Lower leg skin (tissue), 4 donors: ENCODE measurements at regions of chr11 and their contacts with region 1.

Region 1: DNA sequence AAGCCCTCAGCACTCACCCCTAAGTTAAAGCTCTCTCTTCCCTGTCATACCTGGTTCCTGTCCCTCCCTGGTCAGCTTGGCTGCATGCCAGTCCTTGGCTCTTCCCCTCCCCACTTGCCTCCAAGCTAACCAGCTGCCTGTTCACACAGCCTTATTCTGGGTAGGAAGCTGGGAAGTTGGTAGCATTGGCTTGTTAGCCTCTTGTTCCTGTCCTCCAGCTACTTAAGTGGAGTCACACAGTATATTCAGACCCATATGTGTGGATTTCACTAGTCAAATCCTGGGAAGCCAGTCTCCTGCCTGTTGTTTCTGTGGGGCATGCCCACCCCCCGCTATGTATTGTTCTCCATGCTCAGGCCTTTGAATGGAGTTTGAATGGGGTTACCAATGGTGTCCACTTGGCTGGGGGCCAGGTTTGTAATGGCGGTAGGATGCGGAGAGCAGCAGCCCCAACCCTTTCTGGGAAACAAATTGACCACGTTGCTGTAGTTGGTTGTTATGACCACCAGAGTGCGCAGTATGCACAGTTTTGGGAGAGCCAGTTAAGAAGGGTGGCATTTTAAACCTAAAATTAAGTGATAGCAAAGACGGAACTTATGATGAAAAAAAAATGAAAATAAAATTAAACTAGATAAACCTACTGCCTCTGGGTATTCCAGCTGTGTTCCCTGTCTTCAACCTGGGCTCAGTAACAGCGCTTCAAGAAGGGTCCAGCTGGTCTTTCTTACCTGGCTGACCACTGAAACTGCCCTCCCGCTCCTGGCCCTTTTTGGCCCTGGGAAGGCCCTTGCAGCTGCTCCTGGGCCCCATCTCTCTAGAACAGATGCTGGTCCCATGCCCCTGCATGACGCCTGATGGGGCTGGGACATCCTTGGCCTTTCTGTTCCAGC is 10.7 kb upstream of the RPS3 start:
- DNase-seq: peak; percentile 68 to 91
- H3K4me3 ChIP-seq: no peak overlapping the region
- CTCF ChIP-seq: peak in 1 of 3 donors; percentile 61
- POLR2A ChIP-seq: no peak

Region 2: DNA sequence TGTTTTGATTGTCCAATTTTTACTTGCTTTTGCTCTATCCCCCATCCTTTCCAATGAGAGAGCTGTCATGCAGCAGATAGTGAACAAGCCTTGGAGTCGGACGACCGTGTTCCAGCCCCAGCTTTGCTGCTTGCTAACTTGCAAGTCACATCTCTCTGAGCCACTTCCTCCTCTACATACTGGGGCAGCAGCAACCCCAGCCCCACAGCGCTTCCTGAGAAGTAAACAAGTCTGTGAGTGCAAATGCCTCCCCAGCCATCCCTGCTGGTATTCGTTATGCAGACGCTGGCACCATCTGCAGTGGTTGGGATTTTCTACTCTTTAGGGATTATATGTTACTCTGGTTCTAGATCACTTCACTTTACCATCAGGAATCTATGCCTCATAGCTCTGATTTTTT is 113.0 kb before region 1 on chr11:
- intact Hi-C with region 1: loop called (anchors 5 kb)
- DNase-seq: peak; percentile 47 to 87
- H3K4me3 ChIP-seq: no peak overlapping the region
- CTCF ChIP-seq: no peak
- POLR2A ChIP-seq: no peak

Region 3: DNA sequence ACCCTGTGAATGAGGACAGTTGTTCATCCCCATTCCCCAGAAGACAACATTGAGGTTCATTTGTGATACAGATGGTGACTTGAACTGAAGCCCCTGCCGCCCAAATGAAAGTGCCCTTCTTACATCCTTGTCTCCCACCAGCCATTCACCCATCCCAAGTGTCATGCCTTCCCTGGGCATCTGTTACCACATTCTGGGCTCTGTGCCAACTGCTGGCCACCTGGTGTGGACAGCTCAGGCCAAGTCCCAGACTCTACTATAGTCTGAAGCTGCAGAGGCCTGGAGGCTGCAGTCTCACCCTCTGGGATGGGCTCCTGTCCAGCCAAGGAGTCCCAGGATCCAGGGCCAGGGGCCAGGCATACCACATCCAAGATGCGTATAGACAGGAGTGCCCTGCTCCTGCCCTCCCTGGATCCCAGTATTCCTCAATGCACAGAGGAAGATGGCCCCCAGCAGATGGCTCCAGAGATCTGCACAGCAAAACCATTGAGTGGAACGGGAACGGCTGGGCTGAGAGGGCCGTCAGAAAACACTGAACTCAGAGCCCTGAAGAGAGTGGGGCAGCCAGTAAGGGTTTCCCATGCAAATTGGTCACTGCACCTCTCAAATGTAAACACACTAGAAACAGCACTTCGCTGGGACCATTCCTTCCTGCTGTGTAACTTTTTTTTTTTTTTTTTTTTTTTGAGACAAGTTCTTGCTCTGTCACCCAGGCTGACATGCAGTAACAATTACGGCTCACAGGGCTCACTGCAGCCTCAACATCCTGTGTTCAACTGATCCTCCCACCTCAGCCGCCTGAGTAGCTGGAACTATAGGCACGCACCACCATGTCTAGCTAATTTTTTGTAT is 60.0 kb before region 1 on chr11:
- intact Hi-C with region 1: loop called (anchors 5 kb)
- DNase-seq: peak in 1 of 2 donors; percentile 93
- H3K4me3 ChIP-seq: no peak overlapping the region
- CTCF ChIP-seq: peak in 1 of 3 donors; percentile 9
- POLR2A ChIP-seq: no peak

Region 4: DNA sequence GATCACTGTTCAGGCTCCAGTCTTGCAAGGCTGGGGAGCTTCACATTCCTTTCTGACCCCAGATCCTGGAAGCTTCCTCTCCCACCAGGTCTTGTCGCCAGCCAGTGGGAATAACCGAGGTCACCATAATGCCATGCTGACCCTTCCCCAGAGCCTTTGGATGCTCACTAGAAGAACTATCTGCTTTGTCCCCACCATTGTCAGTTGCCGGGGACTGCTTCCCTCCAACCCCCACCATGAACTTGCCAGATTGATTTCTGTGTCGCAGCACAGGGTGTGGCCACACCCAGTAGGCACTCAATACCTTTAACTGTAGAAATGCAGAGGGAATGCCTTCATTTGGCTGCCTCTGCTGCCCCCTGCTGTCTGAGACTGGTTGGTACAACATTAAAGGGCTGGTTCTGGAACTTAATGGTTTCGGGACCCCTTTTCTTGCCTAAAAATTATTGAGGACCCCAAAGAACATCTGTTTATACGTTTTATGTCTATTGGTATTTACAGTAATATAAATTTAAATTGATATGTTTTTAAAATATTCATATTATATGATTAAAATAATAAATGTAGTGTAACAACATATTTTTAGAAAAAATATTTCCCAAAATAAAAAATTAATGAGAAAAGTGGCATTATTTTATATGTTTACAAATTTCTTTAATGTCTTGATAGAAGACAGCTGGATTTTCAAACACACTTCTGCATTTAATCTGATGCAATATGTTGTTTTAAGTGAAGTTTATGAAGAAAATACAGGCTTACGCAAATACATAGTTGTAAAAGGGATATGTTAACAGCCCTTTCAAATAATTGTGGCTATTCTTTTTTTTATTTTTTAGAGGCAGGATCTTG is 143.8 kb after region 1 on chr11:
- intact Hi-C with region 1: loop called (anchors 5 kb)
- DNase-seq: peak; percentile 51 to 92
- H3K4me3 ChIP-seq: no peak overlapping the region
- CTCF ChIP-seq: peak in 1 of 3 donors; percentile 45
- POLR2A ChIP-seq: no peak